Endothelial cell of umbilical vein (primary cell): ENCODE measurements at regions of chr6 and their contacts with region 1.

Region 1: DNA sequence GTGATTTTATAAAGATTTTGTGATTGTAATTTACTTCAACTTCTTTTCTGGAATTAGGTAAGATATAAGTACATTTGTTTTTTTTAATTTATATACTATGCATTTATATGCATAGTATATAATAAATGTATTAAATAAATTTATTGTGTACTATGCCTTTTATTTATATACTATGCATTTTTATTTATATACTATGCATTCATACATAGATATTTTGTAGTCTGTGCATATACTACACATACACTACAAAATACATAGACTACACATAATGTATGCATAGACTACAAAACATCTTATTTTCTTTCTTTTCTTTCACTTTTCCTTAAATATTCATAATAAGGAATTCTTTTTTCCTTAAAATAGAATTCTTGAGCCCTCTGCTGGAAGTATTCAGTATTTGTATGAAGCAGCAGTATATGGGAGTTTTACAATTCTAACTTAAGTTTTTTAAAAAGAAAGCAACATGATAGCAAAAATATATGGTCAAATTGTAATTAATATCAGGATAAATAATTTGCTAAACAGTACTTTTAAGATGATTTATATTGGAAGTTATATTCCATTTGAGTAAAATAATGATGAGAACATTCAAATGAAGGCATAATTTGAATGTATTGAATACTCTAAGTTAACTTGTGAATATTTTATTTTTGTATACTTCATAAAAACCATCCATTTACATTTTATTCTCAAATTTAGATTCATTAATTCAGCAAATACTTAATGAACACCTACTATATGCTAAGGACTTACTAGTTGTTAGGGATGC is 129.3 kb downstream of the KLHL32 start:
- DNase-seq: peak; percentile 29
- H3K4me3 ChIP-seq: no peak overlapping the region
- H3K27ac ChIP-seq: no peak overlapping the region
- H3K4me1 ChIP-seq: no peaks in the 10 kb centered on the region
- H3K27me3 ChIP-seq: peaks cover 6 to 17% of the 10 kb centered on the region in 2 experiments
- CTCF ChIP-seq: peak; percentile 5 to 15
- POLR2A ChIP-seq: no peak

Region 2: DNA sequence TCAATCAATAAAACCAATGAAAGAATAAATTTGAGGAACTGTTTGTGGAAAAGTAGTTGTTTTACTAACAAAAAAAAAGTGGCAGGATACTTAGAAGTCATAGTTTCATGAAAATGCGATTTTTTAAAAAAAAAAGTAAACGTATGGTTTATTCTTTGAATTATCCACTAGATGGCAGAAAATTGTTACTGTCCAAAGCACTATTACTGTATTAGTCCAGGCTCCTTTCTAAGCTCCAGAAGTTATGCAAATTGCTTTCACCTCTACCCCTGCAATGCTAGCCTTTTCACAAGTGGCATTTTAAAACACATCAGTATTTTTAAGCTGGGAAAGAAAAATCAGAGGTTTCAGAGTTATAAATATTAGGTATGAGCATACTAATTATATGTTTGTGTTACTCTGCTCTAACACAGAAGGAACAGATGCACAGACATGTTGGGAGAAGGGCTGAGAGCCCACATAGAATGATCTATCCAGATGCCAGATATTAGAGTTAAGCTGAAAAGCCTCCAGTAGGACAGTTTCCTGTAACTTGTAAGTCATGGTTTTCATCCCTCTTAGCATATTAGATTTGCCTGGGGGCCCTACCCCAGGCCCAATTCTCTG is 427.0 kb before region 1 on chr6:
- CTCF ChIA-PET with region 1: interaction called, 43 read pairs
- POLR2A ChIA-PET with region 1: no interaction called
- dilution Hi-C with region 1: no loop called
- intact Hi-C with region 1: loop called (anchors 1 kb)
- DNase-seq: peak; percentile 17
- H3K4me3 ChIP-seq: no peak overlapping the region
- H3K27ac ChIP-seq: no peak overlapping the region
- H3K4me1 ChIP-seq: no peaks in the 10 kb centered on the region
- H3K27me3 ChIP-seq: no peaks in the 10 kb centered on the region
- CTCF ChIP-seq: peak in 1 of 2 donors; percentile 6
- POLR2A ChIP-seq: no peak